ENCODE measurements at regions of chr10 and their contacts with region 1.

Region 1: DNA sequence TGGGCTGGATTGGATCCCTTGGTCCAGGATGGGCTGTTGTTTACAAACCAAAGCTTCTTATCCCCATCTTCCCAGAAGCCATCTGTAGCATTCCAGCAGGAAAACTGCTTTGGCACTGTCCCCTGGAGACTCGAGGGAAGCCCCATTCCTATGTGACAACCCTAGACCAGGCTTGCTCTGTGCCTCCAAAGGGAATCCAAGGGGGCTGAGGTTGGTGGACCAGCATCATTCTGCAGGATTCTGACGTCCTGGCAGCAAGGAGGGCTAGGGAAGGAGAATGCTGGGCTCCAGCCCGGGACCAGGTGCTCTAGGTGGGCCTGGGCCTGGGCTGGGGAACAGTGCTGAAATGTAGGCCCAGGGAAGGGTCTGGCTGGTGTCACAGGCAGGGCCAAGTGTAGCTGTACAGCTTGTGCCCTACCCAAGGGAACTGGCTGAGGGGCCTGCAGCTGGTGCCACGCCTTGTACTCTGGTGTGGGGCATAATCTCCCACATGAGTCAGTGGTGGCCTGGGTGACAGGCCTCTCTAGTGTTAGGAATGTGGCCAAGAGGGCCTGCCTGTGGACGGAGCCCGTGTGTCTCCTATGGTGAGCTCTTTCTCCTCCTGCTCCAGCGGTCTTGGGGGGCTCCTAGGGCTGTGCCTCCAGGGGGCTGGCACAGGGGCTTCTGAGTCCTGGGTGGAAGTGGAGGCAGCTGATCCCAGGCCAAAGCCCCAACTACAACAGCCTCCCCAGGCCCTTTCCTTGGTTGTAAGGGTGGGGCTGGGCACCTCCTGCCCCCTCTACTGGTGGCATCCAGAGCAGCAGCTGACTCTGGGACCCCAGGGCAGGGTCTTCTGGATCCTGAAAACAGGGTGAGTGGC is 25.2 kb downstream of the TRIM8 start:
- DNase-seq: no peak
- ATAC-seq: peak; percentile 48
- H3K4me3 ChIP-seq: no peak overlapping the region
- H3K27ac ChIP-seq: no peak overlapping the region
- H3K4me1 ChIP-seq: peaks cover 8% of the 10 kb centered on the region
- H3K27me3 ChIP-seq: no peaks in the 10 kb centered on the region
- CTCF ChIP-seq: peak; percentile 25 to 44 (median 39); a peak in 5 of 6 replicates
- EP300 ChIP-seq: no peak
- POLR2A ChIP-seq: no peak
- RAD21 ChIP-seq: peak; percentile 38; the same call in 1 of the 2 replicates

Region 2: DNA sequence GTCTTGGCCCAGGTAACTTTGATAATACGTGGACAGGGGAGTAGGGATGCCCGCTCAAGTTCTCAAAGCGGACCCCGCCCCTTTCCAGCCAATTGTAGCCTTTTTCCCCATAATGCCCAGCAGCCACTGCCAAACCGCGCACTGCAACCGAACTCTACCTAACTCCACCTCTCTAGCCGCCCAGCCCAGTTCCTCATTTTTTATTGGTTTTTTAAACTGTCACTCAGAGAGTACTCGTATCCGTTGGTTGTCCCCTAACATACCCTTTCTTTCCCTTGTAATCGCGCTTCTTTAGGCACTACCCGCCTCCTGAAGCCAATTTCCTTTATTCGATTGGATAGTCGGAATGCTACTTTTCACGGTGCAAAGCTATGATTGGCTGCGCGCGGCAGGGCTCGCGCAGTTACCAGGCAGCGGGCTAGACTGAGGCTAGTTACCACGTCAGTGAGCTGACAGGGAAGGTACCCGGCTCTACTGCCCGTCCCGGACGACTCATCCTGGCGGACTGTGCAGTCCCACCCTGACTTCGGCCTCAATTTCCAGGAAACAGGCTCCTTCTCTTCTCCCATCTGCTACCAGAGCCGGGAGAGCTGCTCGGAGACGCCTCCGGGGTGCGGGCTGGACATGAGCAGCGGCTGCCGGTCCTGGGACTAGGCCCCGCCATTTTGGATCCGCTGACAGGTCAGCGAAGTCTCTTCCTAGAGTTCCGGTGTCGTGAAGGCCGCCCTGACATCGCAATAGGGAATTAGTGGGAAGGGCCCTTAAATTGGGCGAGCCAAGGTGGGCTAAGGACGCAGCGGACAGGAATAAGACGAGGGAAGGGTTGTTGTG is 424.1 kb before region 1 on chr10 and contains the start of gene GBF1:
- CTCF ChIA-PET with region 1: no interaction called
- POLR2A ChIA-PET with region 1: no interaction called
- RAD21 ChIA-PET with region 1: no interaction called
- SMC1A ChIA-PET with region 1: no interaction called
- in situ Hi-C with region 1: no loop called
- intact Hi-C with region 1: no loop called
- DNase-seq: peak; percentile 100
- ATAC-seq: peak; percentile 94
- H3K4me3 ChIP-seq: peak within 1 kb of the TSS; percentile 86
- H3K27ac ChIP-seq: peak within 1 kb of the TSS; percentile 88
- H3K4me1 ChIP-seq: peaks cover 4% of the 10 kb centered on the region; the same call in 1 of the 2 replicates
- H3K27me3 ChIP-seq: peaks cover 3 to 9% of the 10 kb centered on the region in 2 experiments
- CTCF ChIP-seq: no peak
- EP300 ChIP-seq: 0 out of 4 replicates have a peak, but pooled peaks of 1 of the 2 experiments have one; percentile 13
- POLR2A ChIP-seq: peak; percentile 99
- RAD21 ChIP-seq: no peak
- polyA plus RNA-seq, gene GBF1: 0.82 to 1.2 TPM

Region 3: GRCh38 chr10:102432162-102432950 is 237.1 kb before region 1 on chr10 and contains the start of gene CUEDC2:
- CTCF ChIA-PET with region 1: no interaction called
- POLR2A ChIA-PET with region 1: no interaction called
- RAD21 ChIA-PET with region 1: no interaction called
- SMC1A ChIA-PET with region 1: no interaction called
- in situ Hi-C with region 1: no loop called
- intact Hi-C with region 1: no loop called
- DNase-seq: peak; percentile 88
- ATAC-seq: peak; percentile 95
- H3K4me3 ChIP-seq: peak within 1 kb of the TSS; percentile 93
- H3K27ac ChIP-seq: peak within 1 kb of the TSS; percentile 90
- H3K4me1 ChIP-seq: peaks cover 22% of the 10 kb centered on the region
- H3K27me3 ChIP-seq: no peaks in the 10 kb centered on the region
- CTCF ChIP-seq: no peak
- EP300 ChIP-seq: no peak; a peak in 1 of 4 replicates
- POLR2A ChIP-seq: peak; percentile 85
- RAD21 ChIP-seq: no peak
- polyA plus RNA-seq, gene CUEDC2: 20.4 to 45.2 TPM

Region 4: DNA sequence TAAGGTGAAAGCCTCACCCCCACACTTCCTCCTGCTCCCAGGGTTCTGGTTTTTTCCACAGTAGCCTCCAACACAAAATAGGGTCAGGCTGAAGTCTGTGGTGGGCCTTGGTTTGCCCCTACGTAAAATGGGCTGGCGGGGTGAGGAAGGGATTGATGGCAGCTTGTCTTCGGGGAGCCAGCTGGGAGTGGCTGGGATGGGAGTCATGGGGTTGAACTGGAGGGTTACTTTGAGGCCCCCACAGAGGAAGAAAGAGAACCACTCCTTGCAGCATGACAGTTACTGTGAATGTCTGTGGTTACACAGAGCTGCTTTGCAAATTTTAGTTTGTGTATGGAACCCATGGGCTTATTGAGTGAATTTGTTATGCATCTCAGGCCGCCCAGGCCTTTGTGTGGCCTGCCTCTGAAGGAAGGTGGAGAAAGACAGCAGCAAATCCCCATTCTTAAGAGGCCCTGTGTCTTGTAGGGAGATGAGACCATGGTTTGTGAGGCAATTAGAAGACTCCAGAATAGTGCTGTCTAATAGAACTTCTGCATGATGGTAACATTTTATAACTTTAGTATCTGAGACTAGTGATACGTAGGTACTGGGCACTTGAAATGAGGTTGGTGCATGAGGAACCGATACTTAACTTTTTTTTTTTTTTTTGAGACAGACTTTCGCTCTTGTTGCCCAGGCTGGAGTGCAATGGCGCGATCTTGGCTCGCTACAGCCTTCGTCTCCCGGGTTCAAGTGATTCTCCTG is 17.1 kb before region 1 on chr10:
- CTCF ChIA-PET with region 1: interaction called, 128 read pairs
- POLR2A ChIA-PET with region 1: interaction called, 151 read pairs
- RAD21 ChIA-PET with region 1: interaction called, 81 read pairs
- SMC1A ChIA-PET with region 1: interaction called, 103 read pairs
- in situ Hi-C with region 1: no loop called
- intact Hi-C with region 1: no loop called
- DNase-seq: peak; percentile 75
- ATAC-seq: peak; percentile 61
- H3K4me3 ChIP-seq: peak overlapping the region; percentile 62
- H3K27ac ChIP-seq: peak overlapping the region; percentile 96
- H3K4me1 ChIP-seq: peaks cover 56% of the 10 kb centered on the region
- H3K27me3 ChIP-seq: no peaks in the 10 kb centered on the region
- CTCF ChIP-seq: no peak
- EP300 ChIP-seq: peak in 1 of 2 experiments; percentile 44; a peak in 2 of 4 replicates
- POLR2A ChIP-seq: no peak
- RAD21 ChIP-seq: no peak